ENCODE measurements at regions of chrX and their contacts with region 1.

Region 1: DNA sequence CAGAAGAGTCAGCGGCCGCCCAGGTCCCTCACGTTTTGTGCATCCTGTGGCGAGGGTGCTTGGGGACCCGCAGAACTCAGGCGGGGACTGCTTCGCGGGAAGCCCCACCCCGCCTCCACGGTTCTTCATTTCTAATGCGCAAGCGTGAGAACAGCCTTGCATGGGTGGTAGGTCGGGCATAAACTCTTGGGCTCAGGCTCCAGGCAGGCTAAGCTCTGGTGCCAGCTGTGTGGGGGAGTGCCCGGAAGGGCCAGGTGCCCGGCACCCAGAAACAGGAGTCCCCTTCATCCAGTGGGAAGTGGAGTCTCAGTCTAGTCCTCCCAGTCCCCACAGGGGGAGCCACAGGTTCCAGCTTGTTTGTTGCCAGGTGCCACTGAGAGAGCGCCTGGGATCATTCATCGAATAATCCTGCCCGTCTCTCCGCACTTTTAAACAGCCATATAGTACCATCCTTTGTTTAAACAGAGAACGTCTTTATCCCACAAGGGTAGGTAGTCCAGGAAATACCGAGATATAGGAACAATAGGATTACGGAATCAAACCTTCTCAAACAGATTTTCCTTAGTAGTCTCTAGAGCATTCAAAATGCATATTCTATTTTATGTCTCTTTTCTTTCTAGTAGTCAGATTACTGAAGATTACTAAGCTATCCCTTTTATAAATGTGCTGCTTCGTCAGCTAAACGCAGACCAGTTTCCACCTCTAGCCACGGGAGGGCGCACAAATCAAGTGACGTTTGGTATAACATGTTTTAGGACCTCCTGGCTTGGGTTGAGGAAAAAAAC is 12.7 kb upstream of the RBBP7 start:
- DNase-seq: peak; percentile 85
- ATAC-seq: peak; percentile 81
- H3K4me3 ChIP-seq: peak overlapping the region; percentile 74
- H3K27ac ChIP-seq: peak overlapping the region; percentile 13; the same call in 1 of the 2 replicates
- H3K4me1 ChIP-seq: peaks cover 3% of the 10 kb centered on the region; the same call in 1 of the 2 replicates
- H3K27me3 ChIP-seq: no peaks in the 10 kb centered on the region
- CTCF ChIP-seq: peak; percentile 81

Region 2: GRCh38 chrX:16670998-16671397 is 211.9 kb before region 1 on chrX:
- CTCF ChIA-PET with region 1: no interaction called
- POLR2A ChIA-PET with region 1: no interaction called
- intact Hi-C with region 1: no loop called
- DNase-seq: peak; percentile 59
- ATAC-seq: peak; percentile 77
- H3K4me3 ChIP-seq: no peak overlapping the region
- H3K27ac ChIP-seq: no peak overlapping the region
- H3K4me1 ChIP-seq: peaks cover 9% of the 10 kb centered on the region
- H3K27me3 ChIP-seq: no peaks in the 10 kb centered on the region
- CTCF ChIP-seq: peak; percentile 66

Region 3: DNA sequence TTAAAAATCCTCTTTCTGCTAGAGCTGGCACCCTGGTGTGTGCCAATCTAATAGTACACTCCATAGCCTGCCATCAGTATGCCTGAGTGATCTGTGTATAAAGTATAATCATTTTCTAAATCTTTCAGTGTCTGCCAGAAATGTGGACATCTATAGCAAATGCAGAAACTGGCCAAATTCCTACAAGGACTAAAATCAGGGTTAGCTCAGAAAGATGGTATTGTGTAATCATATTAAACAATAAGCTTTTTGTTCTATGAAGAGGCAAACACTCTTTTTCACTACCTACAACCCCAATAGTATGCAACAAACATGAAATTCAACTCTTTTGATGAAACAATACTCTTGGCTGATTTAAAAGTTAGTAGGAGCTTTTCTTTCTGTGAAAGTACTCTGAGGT is 104.3 kb before region 1 on chrX:
- CTCF ChIA-PET with region 1: no interaction called
- POLR2A ChIA-PET with region 1: no interaction called
- intact Hi-C with region 1: no loop called
- DNase-seq: peak; percentile 25
- ATAC-seq: peak; percentile 33; the same call in 1 of the 2 replicates
- H3K4me3 ChIP-seq: no peak overlapping the region
- H3K27ac ChIP-seq: peak overlapping the region; percentile 4; the same call in 1 of the 2 replicates
- H3K4me1 ChIP-seq: 0 out of 2 replicates have a peak, but pooled peaks cover 6% of the 10 kb centered on the region
- H3K27me3 ChIP-seq: no peaks in the 10 kb centered on the region
- CTCF ChIP-seq: no peak

Region 4: DNA sequence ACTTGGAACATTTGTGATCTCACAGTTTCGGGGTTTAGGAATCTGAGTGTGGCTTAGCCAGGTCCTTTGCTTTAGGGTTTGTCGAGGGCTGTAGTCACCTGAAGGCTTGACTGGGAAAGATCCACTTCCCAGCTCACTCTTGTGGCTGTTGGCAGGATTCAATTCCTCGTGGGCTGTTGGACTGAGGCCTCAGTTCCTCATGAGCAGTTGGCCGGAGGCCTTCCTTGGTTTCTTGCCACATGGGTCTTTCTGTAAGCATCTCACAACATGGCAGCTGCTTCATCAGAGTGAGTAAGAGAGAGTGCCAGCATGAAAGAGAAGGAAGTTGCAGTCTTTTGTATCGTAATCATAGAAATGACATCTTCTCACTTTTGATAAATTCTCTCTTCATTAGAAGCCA is 85.5 kb before region 1 on chrX:
- CTCF ChIA-PET with region 1: no interaction called
- POLR2A ChIA-PET with region 1: no interaction called
- intact Hi-C with region 1: no loop called
- DNase-seq: no peak
- ATAC-seq: no peak
- H3K4me3 ChIP-seq: no peak overlapping the region
- H3K27ac ChIP-seq: no peak overlapping the region
- H3K4me1 ChIP-seq: no peaks in the 10 kb centered on the region
- H3K27me3 ChIP-seq: no peaks in the 10 kb centered on the region
- CTCF ChIP-seq: no peak

Region 5: DNA sequence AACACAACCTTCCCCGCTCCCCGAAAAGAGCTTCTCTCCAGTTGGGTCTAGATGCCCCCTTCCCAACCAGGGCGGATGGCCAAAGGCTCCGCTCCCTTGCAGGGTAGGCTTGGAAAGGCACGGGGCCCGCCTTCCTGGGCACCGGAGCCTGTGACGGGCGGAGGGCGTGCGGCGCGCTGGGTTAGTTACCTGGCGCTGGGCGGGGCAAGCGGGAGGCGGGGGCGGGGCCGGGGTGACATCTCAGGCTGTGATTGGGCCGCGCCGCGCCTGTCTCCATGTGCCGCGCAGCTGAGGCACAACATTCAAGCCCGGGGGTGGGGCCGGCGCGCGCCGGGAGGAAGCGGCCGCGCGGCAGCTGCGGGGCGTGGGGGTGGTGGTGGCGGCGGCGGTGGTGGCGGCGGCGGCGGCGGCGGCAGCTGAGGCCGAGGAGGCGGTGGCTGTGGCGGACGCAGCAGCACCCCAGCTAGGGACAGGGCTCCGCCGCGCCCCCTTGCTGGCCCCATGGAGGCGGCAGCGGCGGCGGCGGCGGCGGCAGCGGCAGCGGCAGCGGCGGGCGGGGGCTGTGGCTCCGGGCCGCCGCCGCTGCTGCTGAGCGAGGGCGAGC is 63.6 kb after region 1 on chrX and contains the start of gene REPS2:
- CTCF ChIA-PET with region 1: interaction called, 3 read pairs
- POLR2A ChIA-PET with region 1: no interaction called
- intact Hi-C with region 1: loop called (anchors 5 kb)
- DNase-seq: peak; percentile 82
- ATAC-seq: peak; percentile 93
- H3K4me3 ChIP-seq: peak within 1 kb of the TSS; percentile 83
- H3K27ac ChIP-seq: no peak within 1 kb of the TSS
- H3K4me1 ChIP-seq: peaks cover 19% of the 10 kb centered on the region
- H3K27me3 ChIP-seq: no peaks in the 10 kb centered on the region
- CTCF ChIP-seq: no peak
- total RNA-seq, gene REPS2: 2.6 and 6.3 TPM in 2 replicates

Region 6: DNA sequence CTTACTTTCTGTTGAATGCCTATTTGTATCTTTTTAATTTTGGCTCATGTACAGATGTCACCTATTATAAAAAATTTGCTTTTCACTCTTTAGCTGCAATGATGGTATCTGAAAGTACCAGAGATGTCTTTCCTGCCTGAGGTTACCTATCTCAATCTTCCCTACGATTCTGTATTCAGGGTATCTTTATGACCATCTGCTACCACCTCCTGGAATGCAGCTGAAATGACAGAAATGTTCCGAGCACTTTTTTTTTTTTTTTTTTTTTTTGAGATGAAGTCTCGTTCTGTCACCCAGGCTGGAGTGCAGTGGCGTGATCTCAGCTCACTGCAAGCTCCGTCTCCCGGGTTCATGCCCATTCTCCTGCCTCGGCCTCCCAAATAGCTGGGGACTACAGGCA is 199.9 kb after region 1 on chrX:
- CTCF ChIA-PET with region 1: interaction called, 9 read pairs
- POLR2A ChIA-PET with region 1: no interaction called
- intact Hi-C with region 1: loop called (anchors 1 kb)
- DNase-seq: peak; percentile 61
- ATAC-seq: peak; percentile 59
- H3K4me3 ChIP-seq: peak overlapping the region; percentile 35; the same call in 1 of the 2 replicates
- H3K27ac ChIP-seq: no peak overlapping the region
- H3K4me1 ChIP-seq: peaks cover 12% of the 10 kb centered on the region
- H3K27me3 ChIP-seq: no peaks in the 10 kb centered on the region
- CTCF ChIP-seq: no peak; the same call in 1 of the 2 replicates